PC-9 (cell line): ENCODE measurements at regions of chr17 and their contacts with region 1.

Region 1: GRCh38 chr17:16551878-16552636 is 16.9 kb downstream of the ZNF287 start:
- DNase-seq: no peak
- H3K4me3 ChIP-seq: no peak overlapping the region
- H3K27ac ChIP-seq: no peak overlapping the region
- H3K4me1 ChIP-seq: no peaks in the 10 kb centered on the region
- H3K27me3 ChIP-seq: no peaks in the 10 kb centered on the region
- CTCF ChIP-seq: no peak

Region 2: GRCh38 chr17:16623282-16623681 is 71.2 kb after region 1 on chr17:
- CTCF ChIA-PET with region 1: no interaction called
- POLR2A ChIA-PET with region 1: no interaction called
- intact Hi-C with region 1: loop called (anchors 5 kb)
- DNase-seq: no peak
- H3K4me3 ChIP-seq: no peak overlapping the region
- H3K27ac ChIP-seq: no peak overlapping the region
- H3K4me1 ChIP-seq: no peaks in the 10 kb centered on the region
- H3K27me3 ChIP-seq: no peaks in the 10 kb centered on the region
- CTCF ChIP-seq: no peak

Region 3: DNA sequence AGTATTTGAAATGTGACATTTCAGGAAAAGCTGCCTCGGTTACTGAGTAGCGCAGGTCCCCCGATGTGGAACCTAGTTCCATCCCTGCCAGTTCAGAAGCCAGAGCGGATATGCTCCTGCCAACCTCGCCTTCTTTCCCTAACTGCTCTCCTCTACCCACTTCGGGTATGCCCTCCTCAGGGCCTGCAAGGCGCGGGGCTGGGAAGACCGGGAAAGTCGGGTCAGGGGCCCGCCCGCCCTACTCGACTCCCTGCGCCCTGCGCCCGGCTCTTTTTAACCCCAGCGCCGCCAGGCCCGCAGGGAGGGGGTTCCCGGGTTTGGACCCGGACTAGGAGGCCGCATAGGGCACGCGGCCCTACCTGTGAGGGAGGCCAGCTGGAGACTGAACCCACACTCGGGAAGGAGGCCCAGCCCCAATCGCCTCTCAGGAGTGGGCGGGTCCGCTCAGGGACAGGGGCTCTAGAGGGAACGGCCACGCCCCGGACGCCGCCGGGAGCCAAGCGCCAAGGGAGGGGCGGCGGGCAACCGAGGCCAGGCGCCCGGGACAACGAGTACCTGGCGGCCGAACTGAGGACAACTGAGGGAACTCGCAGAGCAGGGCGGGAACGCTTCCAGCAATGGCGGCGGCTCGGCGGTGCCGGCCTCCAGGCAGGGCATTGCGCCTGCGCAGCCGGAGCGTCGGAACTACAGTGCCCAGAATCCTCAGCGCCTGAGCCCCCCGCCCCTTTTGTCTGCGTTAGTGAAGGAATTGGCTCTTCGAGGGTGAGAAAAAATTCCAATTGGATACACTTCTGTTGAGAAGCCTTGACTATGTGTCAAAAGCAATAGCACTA is 101.4 kb after region 1 on chr17 and contains the start of gene ZNF624:
- CTCF ChIA-PET with region 1: no interaction called
- POLR2A ChIA-PET with region 1: no interaction called
- intact Hi-C with region 1: no loop called
- DNase-seq: peak; percentile 78 to 97
- H3K4me3 ChIP-seq: peak within 1 kb of the TSS; percentile 69
- H3K27ac ChIP-seq: peak within 1 kb of the TSS; percentile 86
- H3K4me1 ChIP-seq: peaks cover 12% of the 10 kb centered on the region; the same call in 1 of the 2 replicates
- H3K27me3 ChIP-seq: no peaks in the 10 kb centered on the region
- CTCF ChIP-seq: no peak
- total RNA-seq, gene ZNF624: 6.5 and 7.2 TPM in 2 replicates